ENCODE measurements at regions of chr7 and their contacts with region 1.

Region 1: GRCh38 chr7:129163875-129164544 is 19.5 kb downstream of the TSPAN33 start:
- DNase-seq: peak; percentile 52
- ATAC-seq: no peak
- H3K4me3 Mint-ChIP-seq: no peak overlapping the region
- H3K27ac Mint-ChIP-seq: no peak overlapping the region
- H3K4me1 Mint-ChIP-seq: peaks cover 11% of the 10 kb centered on the region
- H3K27me3 Mint-ChIP-seq: no peaks in the 10 kb centered on the region

Region 2: DNA sequence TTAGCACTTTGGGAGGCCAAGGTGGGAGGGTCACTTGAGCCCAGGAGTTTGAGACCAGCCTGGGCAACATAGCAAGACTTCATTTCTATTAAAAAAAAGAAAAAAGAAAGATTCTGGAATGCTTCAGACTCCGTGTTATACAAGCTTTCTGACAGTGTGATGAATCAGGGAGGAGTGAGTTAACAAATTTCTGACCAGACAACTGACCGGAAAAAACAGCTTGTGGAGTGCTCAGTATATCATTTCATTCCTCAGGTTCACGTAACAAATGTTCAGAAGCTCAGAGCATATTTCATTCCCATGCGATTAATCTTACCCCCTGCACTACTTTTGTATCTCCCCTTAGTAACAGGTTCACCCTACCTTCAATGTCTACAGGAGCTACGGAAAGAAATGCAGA is 80.5 kb before region 1 on chr7:
- CTCF ChIA-PET with region 1: interaction called, 13 read pairs
- POLR2A ChIA-PET with region 1: no interaction called
- DNase-seq: no peak
- ATAC-seq: no peak
- H3K4me3 Mint-ChIP-seq: no peak overlapping the region
- H3K27ac Mint-ChIP-seq: no peak overlapping the region
- H3K4me1 Mint-ChIP-seq: no peaks in the 10 kb centered on the region
- H3K27me3 Mint-ChIP-seq: peaks cover 12% of the 10 kb centered on the region

Region 3: GRCh38 chr7:129122751-129123509 is 41.1 kb before region 1 on chr7:
- CTCF ChIA-PET with region 1: interaction called, 14 read pairs
- POLR2A ChIA-PET with region 1: no interaction called
- DNase-seq: no peak
- ATAC-seq: peak; percentile 44
- H3K4me3 Mint-ChIP-seq: no peak overlapping the region
- H3K27ac Mint-ChIP-seq: peak overlapping the region; percentile 60
- H3K4me1 Mint-ChIP-seq: peaks cover 21% of the 10 kb centered on the region
- H3K27me3 Mint-ChIP-seq: peaks cover 8% of the 10 kb centered on the region

Region 4: GRCh38 chr7:129144095-129144833 is 19.7 kb before region 1 on chr7 and contains the start of gene TSPAN33:
- CTCF ChIA-PET with region 1: interaction called, 33 read pairs
- POLR2A ChIA-PET with region 1: no interaction called
- DNase-seq: peak; percentile 71
- ATAC-seq: peak; percentile 99
- H3K4me3 Mint-ChIP-seq: peak within 1 kb of the TSS; percentile 84
- H3K27ac Mint-ChIP-seq: no peak within 1 kb of the TSS
- H3K4me1 Mint-ChIP-seq: peaks cover 16% of the 10 kb centered on the region
- H3K27me3 Mint-ChIP-seq: peaks cover 28% of the 10 kb centered on the region
- total RNA-seq, gene TSPAN33: 2.7 to 2.8 TPM

Region 5: DNA sequence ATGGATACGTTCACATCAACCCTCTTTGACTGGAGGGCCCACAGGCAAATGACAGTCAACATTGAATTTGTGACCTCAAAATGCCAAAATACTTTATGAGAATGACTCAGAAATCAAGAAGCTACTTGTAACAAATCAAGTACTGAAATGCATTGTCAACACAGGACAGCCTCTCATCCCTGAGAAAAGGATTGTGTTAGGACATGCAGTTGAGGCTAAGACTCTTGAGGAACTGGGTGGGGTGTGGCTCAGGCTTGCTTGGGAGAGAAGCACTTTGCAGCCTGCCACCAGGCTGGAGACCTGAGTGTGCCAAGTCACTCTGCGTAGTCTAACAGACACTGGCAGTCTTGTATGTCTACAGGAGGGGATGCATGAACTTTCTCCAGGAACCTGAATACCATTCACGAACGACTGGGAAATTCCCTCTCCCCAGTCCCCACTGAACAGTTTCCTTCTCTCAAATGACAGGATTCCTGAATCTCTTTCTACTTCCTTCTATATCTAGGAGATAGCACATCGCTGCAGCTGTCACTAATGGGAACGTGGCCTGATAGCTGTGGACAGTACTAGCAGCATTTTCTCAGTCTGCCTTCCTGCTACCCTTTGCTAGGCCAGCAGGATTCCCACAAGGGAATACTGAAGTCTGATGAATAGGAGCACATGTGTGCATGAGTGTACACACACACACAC is 21.1 kb after region 1 on chr7:
- CTCF ChIA-PET with region 1: interaction called, 11 read pairs
- POLR2A ChIA-PET with region 1: no interaction called
- DNase-seq: no peak
- ATAC-seq: no peak
- H3K4me3 Mint-ChIP-seq: no peak overlapping the region
- H3K27ac Mint-ChIP-seq: no peak overlapping the region
- H3K4me1 Mint-ChIP-seq: peaks cover 5% of the 10 kb centered on the region
- H3K27me3 Mint-ChIP-seq: peaks cover 44% of the 10 kb centered on the region

Region 6: GRCh38 chr7:129210256-129210988 is 46.4 kb after region 1 on chr7:
- CTCF ChIA-PET with region 1: interaction called, 81 read pairs
- POLR2A ChIA-PET with region 1: interaction called, 3 read pairs
- DNase-seq: peak; percentile 78
- ATAC-seq: peak; percentile 88
- H3K4me3 Mint-ChIP-seq: no peak overlapping the region
- H3K27ac Mint-ChIP-seq: no peak overlapping the region
- H3K4me1 Mint-ChIP-seq: no peaks in the 10 kb centered on the region
- H3K27me3 Mint-ChIP-seq: peaks cover 5% of the 10 kb centered on the region

Region 7: GRCh38 chr7:129271500-129272355 is 107.7 kb after region 1 on chr7:
- CTCF ChIA-PET with region 1: interaction called, 16 read pairs
- POLR2A ChIA-PET with region 1: no interaction called
- DNase-seq: peak; percentile 82
- ATAC-seq: peak; percentile 98
- H3K4me3 Mint-ChIP-seq: peak overlapping the region; percentile 61
- H3K27ac Mint-ChIP-seq: peak overlapping the region; percentile 61
- H3K4me1 Mint-ChIP-seq: peaks cover 3% of the 10 kb centered on the region
- H3K27me3 Mint-ChIP-seq: no peaks in the 10 kb centered on the region

Region 8: DNA sequence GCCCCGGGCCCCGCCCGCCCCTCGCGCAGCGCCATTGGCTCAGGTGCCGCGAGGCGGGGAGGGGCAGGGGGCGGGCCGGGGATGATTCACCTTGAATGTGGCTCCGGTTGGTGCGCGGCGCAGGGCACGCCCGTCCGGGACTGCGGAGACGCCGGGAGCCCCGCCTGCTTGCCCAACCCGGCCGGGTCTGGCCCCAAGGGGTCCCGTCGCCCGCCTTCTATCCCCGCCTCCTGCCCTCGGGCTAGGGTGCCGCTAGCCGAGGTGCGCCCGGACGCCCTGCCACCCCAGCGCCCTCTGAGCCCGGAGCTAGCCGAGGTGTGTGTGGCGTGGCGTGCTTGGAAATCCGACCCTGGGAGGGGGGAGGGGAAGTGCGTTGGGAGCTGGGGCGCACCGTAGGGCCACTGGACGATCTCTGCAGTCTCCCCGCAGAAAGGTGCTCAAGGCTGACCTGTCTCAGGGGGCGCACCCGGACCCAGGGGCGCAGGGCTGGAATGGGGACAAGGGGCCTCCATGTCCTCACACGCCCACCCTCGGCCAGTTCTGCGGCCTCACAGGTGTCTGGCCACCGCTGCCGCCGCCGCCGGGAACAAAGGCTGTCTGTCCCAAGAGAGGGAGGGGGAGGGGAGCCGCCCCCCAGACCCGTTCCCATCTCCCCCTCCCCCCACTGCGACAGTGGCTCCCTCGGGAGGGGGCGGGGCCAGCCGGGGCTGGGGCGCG is 616.4 kb after region 1 on chr7:
- CTCF ChIA-PET with region 1: no interaction called
- POLR2A ChIA-PET with region 1: no interaction called
- DNase-seq: peak; percentile 74
- ATAC-seq: peak; percentile 80
- H3K4me3 Mint-ChIP-seq: peak overlapping the region; percentile 40
- H3K27ac Mint-ChIP-seq: no peak overlapping the region
- H3K4me1 Mint-ChIP-seq: peaks cover 39% of the 10 kb centered on the region
- H3K27me3 Mint-ChIP-seq: peaks cover 66% of the 10 kb centered on the region